K562 (cell line): ENCODE measurements at regions of chr14 and their contacts with region 1.

Region 1: DNA sequence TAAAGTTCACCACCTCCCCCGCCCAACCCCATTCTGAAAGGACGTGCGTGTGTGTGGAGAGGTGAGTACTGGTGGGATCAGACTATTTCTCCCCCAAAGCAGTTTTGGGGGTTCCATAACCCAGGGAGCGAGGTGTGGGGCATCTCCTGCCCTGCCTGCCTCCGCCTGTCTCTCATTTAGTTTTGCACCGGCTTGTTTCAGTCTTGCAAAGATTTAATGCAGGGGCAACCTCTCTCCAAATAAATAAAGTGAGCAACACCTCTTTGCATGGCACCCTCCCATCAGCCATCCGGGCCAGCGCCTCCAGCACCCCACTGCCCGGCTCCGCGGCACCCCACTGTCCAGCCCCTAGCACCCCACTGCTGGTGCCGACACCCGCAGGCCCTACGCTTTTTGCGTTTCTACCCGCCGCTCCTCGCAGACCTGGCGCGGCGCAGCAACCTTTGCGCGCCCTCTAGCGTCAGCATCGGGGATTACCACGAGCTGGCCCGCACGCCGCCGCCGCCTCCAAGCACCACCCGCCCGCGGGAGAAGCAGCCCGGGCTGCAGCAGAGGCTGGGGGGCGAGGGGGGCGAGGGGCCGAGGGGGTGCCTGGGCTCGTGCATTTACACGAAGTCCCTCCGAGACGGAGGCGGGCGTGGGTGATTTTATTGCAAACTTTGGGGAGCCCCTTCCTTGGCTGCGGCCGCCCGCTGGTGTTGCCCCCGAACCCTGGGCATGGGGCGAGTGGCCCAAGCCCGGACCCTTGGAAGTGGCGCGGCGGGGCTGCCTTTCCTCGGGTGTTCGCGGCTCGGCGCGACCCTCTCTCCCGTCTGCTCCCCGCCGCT is 55.8 kb upstream of the VRK1 start:
- DNase-seq: peak; percentile 68 to 79 (median 77)
- ATAC-seq: peak; percentile 94
- H3K4me3 ChIP-seq: no peak overlapping the region
- H3K27ac ChIP-seq: no peak overlapping the region
- H3K4me1 ChIP-seq: peaks cover 0 to 9% of the 10 kb centered on the region in 2 experiments; a peak in 2 of 5 replicates
- H3K27me3 ChIP-seq: peaks cover 54 to 59% of the 10 kb centered on the region in 2 experiments
- CTCF ChIP-seq: peak; percentile 70 to 90 (median 80)
- EP300 ChIP-seq: no peak
- POLR2A ChIP-seq: no peak
- RAD21 ChIP-seq: peak; percentile 81 to 82

Region 2: GRCh38 chr14:96567289-96567899 is 174.0 kb before region 1 on chr14:
- CTCF ChIA-PET with region 1: interaction called, 10 read pairs
- POLR2A ChIA-PET with region 1: no interaction called
- in situ Hi-C with region 1: no loop called
- intact Hi-C with region 1: loop called (anchors 1 kb)
- DNase-seq: peak in 1 of 4 experiments; percentile 40
- ATAC-seq: peak; percentile 95
- H3K4me3 ChIP-seq: no peak overlapping the region
- H3K27ac ChIP-seq: no peak overlapping the region
- H3K4me1 ChIP-seq: no peaks in the 10 kb centered on the region
- H3K27me3 ChIP-seq: no peaks in the 10 kb centered on the region
- CTCF ChIP-seq: peak; percentile 36 to 75 (median 57); a peak in 5 of 6 replicates
- EP300 ChIP-seq: no peak
- POLR2A ChIP-seq: no peak
- RAD21 ChIP-seq: peak; percentile 56 to 76

Region 3: GRCh38 chr14:96729889-96730288 is 11.5 kb before region 1 on chr14:
- CTCF ChIA-PET with region 1: no interaction called
- POLR2A ChIA-PET with region 1: no interaction called
- in situ Hi-C with region 1: no loop called
- intact Hi-C with region 1: no loop called
- DNase-seq: no peak
- ATAC-seq: no peak
- H3K4me3 ChIP-seq: no peak overlapping the region
- H3K27ac ChIP-seq: no peak overlapping the region
- H3K4me1 ChIP-seq: no peaks in the 10 kb centered on the region
- H3K27me3 ChIP-seq: peaks cover 65% of the 10 kb centered on the region in 2 experiments
- CTCF ChIP-seq: no peak
- EP300 ChIP-seq: no peak
- POLR2A ChIP-seq: no peak
- RAD21 ChIP-seq: no peak

Region 4: GRCh38 chr14:96938946-96939345 is 197.6 kb after region 1 on chr14:
- CTCF ChIA-PET with region 1: no interaction called
- POLR2A ChIA-PET with region 1: no interaction called
- in situ Hi-C with region 1: no loop called
- intact Hi-C with region 1: loop called (anchors 5 kb)
- DNase-seq: peak; percentile 56 to 64 (median 64)
- ATAC-seq: peak; percentile 84
- H3K4me3 ChIP-seq: no peak overlapping the region
- H3K27ac ChIP-seq: no peak overlapping the region
- H3K4me1 ChIP-seq: peaks cover 0 to 1% of the 10 kb centered on the region in 2 experiments; a peak in 1 of 5 replicates
- H3K27me3 ChIP-seq: no peaks in the 10 kb centered on the region
- CTCF ChIP-seq: peak; percentile 66 to 87 (median 78)
- EP300 ChIP-seq: no peak
- POLR2A ChIP-seq: no peak
- RAD21 ChIP-seq: peak; percentile 25 to 77; a peak in 2 of 4 replicates